HCT116 (cell line): ENCODE measurements at regions of chr15 and their contacts with region 1.

Region 1: GRCh38 chr15:52078876-52079700 is 33.5 kb downstream of the BCL2L10 start:
- DNase-seq: peak; percentile 54
- ATAC-seq: peak; percentile 92
- H3K4me3 ChIP-seq: no peak overlapping the region
- H3K27ac ChIP-seq: no peak overlapping the region
- H3K4me1 ChIP-seq: peaks cover 0 to 13% of the 10 kb centered on the region in 2 experiments; a peak in 3 of 4 replicates
- H3K27me3 ChIP-seq: no peaks in the 10 kb centered on the region
- CTCF ChIP-seq: peak; percentile 69 to 93 (median 92)
- POLR2A ChIP-seq: no peak
- RAD21 ChIP-seq: peak; percentile 85

Region 2: GRCh38 chr15:51649659-51650521 is 429.2 kb before region 1 on chr15:
- CTCF ChIA-PET with region 1: interaction called, 6 read pairs
- POLR2A ChIA-PET with region 1: no interaction called
- RAD21 ChIA-PET with region 1: no interaction called
- intact Hi-C with region 1: loop called (anchors 10 kb)
- DNase-seq: peak; percentile 71
- ATAC-seq: peak; percentile 98
- H3K4me3 ChIP-seq: no peak overlapping the region
- H3K27ac ChIP-seq: no peak overlapping the region
- H3K4me1 ChIP-seq: peaks cover 3 to 4% of the 10 kb centered on the region in 2 experiments; a peak in 2 of 4 replicates
- H3K27me3 ChIP-seq: no peaks in the 10 kb centered on the region
- CTCF ChIP-seq: peak; percentile 75 to 92 (median 82)
- POLR2A ChIP-seq: no peak
- RAD21 ChIP-seq: peak; percentile 94

Region 3: GRCh38 chr15:51667478-51667877 is 411.6 kb before region 1 on chr15:
- CTCF ChIA-PET with region 1: no interaction called
- POLR2A ChIA-PET with region 1: no interaction called
- RAD21 ChIA-PET with region 1: no interaction called
- intact Hi-C with region 1: no loop called
- DNase-seq: no peak
- ATAC-seq: no peak
- H3K4me3 ChIP-seq: no peak overlapping the region
- H3K27ac ChIP-seq: no peak overlapping the region
- H3K4me1 ChIP-seq: no peaks in the 10 kb centered on the region
- H3K27me3 ChIP-seq: no peaks in the 10 kb centered on the region
- CTCF ChIP-seq: no peak
- POLR2A ChIP-seq: no peak
- RAD21 ChIP-seq: no peak

Region 4: DNA sequence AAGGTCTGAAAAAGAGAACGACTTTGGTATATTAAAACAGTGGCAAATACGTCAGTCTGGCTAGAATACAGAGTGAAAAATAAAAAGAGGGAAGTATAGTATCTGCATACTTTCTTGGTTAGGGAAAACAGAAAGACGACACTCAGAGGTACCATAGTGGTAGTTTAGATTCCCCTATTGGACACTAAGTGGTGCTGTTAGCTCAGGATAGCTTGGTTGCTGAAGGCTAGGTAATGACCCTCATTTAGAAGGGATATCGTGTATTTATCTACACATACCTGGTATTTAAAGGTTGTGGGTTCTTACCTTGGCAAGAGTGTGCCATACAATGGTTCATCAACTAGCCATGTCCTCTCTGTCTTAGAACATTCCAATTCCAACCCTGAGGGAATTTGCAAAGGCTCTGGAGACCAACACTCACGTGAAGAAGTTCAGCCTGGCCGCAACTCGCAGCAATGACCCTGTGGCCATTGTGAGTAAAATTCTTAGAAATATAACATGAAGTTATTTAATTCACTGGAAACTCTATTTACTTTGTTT is 296.7 kb before region 1 on chr15:
- CTCF ChIA-PET with region 1: interaction called, 4 read pairs
- POLR2A ChIA-PET with region 1: no interaction called
- RAD21 ChIA-PET with region 1: no interaction called
- intact Hi-C with region 1: loop called (anchors 5 kb)
- DNase-seq: peak; percentile 38
- ATAC-seq: peak; percentile 75
- H3K4me3 ChIP-seq: no peak overlapping the region
- H3K27ac ChIP-seq: no peak overlapping the region
- H3K4me1 ChIP-seq: peaks cover 0 to 10% of the 10 kb centered on the region in 2 experiments; a peak in 3 of 4 replicates
- H3K27me3 ChIP-seq: no peaks in the 10 kb centered on the region
- CTCF ChIP-seq: peak; percentile 50 to 67 (median 59); a peak in 5 of 6 replicates
- POLR2A ChIP-seq: no peak
- RAD21 ChIP-seq: peak; percentile 77

Region 5: DNA sequence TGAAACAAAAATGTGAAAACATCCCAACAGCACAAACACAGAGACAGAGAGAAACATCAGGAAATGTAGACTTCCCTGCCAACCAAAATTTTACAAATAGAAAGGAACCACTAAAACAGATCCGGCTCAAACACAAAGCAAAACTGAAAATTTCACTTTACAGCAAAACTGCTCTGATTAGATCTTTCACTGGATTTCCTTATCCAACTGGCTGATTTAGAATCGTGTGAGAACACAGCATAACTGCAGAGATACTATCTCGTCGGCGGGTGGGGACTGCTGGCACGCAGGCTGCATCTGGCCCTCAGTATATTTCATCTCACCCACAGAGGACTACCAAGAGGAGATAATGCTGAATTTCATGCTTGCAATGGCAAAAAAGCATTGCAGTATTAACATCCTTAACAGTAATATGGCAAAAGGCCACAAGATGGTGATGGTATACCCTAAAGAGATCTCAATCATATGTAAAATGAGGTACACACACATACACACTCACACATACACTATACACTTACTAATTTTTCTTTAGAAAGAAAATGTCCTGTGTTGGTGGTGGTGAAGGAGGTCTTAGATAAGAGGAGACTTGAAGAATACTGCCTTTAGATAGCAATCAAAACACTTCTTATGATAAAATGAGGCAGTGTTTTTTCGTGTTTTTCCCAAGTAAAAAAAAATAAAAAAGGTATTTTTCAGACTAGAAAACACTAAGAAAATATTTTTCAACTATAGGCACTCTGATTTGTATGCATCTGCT is 96.9 kb before region 1 on chr15:
- CTCF ChIA-PET with region 1: interaction called, 7 read pairs
- POLR2A ChIA-PET with region 1: no interaction called
- RAD21 ChIA-PET with region 1: interaction called in 1 of 2 experiments, 3 read pairs
- intact Hi-C with region 1: loop called (anchors 1 kb)
- DNase-seq: peak; percentile 50
- ATAC-seq: peak; percentile 93
- H3K4me3 ChIP-seq: no peak overlapping the region
- H3K27ac ChIP-seq: no peak overlapping the region
- H3K4me1 ChIP-seq: peaks cover 0 to 11% of the 10 kb centered on the region in 2 experiments; a peak in 2 of 4 replicates
- H3K27me3 ChIP-seq: no peaks in the 10 kb centered on the region
- CTCF ChIP-seq: peak; percentile 44 to 82 (median 76); a peak in 5 of 6 replicates
- POLR2A ChIP-seq: no peak
- RAD21 ChIP-seq: peak; percentile 88

Region 6: DNA sequence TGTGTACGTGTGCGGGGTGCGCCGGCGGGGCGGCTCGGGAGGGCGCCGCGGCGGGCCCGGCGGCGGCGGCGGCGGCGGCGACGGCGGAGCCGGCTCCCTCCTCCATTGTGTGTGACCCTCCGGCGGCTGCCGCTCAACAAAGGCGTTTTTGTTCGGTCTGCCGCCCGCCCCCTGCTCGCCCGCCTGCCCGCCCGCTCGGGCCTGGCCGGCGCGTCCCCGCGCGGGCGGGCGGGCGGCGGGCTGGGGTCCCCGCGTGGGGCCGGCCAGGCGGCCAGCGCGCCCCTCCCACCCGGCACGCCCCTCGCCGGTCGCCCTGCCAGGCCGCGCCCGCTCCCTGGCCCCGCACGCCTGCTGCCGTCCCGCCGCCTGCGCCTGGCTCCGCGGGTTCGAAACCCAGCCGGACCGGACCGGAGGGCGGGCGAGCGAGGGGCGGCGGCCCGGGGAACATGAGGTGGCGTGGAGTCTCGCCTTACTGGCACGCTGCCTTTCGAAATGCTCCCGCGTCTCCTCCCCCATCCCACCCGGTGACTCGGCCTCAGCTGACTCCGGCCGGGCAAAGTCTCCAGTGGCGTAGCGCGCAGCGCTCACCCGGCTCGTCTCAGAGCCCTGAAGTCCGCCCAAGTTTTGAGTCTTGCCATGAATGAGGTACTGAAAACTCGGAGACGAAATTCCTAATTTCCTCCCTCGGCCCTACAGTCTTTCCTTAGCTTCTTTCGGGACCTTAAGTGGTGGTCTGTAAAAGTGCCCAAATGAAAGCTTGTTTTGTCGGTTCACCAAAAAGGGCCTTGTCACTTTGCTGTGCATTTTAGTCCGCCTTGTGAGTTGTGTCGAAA is 59.5 kb before region 1 on chr15:
- CTCF ChIA-PET with region 1: no interaction called
- POLR2A ChIA-PET with region 1: interaction called, 5 read pairs
- RAD21 ChIA-PET with region 1: interaction called in 1 of 2 experiments, 3 read pairs
- intact Hi-C with region 1: loop called (anchors 2 kb)
- DNase-seq: no peak
- ATAC-seq: peak; percentile 79
- H3K4me3 ChIP-seq: peak overlapping the region; percentile 76 to 78
- H3K27ac ChIP-seq: peak overlapping the region; percentile 90
- H3K4me1 ChIP-seq: peaks cover 34 to 45% of the 10 kb centered on the region in 2 experiments
- H3K27me3 ChIP-seq: no peaks in the 10 kb centered on the region
- CTCF ChIP-seq: no peak
- POLR2A ChIP-seq: no peak
- RAD21 ChIP-seq: no peak

Region 7: GRCh38 chr15:52068004-52068615 is 11.0 kb before region 1 on chr15:
- CTCF ChIA-PET with region 1: interaction called, 10 read pairs
- POLR2A ChIA-PET with region 1: interaction called, 3 read pairs
- RAD21 ChIA-PET with region 1: no interaction called
- intact Hi-C with region 1: no loop called
- DNase-seq: no peak
- ATAC-seq: no peak
- H3K4me3 ChIP-seq: no peak overlapping the region
- H3K27ac ChIP-seq: no peak overlapping the region
- H3K4me1 ChIP-seq: no peaks in the 10 kb centered on the region
- H3K27me3 ChIP-seq: no peaks in the 10 kb centered on the region
- CTCF ChIP-seq: no peak
- POLR2A ChIP-seq: no peak
- RAD21 ChIP-seq: no peak

Region 8: GRCh38 chr15:52124270-52124880 is 45.3 kb after region 1 on chr15:
- CTCF ChIA-PET with region 1: no interaction called
- POLR2A ChIA-PET with region 1: no interaction called
- RAD21 ChIA-PET with region 1: no interaction called
- intact Hi-C with region 1: no loop called
- DNase-seq: no peak
- ATAC-seq: no peak
- H3K4me3 ChIP-seq: no peak overlapping the region
- H3K27ac ChIP-seq: no peak overlapping the region
- H3K4me1 ChIP-seq: peaks cover 0 to 8% of the 10 kb centered on the region in 2 experiments; a peak in 1 of 4 replicates
- H3K27me3 ChIP-seq: no peaks in the 10 kb centered on the region
- CTCF ChIP-seq: no peak
- POLR2A ChIP-seq: no peak
- RAD21 ChIP-seq: no peak

Region 9: GRCh38 chr15:52154896-52155865 is 76.1 kb after region 1 on chr15:
- CTCF ChIA-PET with region 1: no interaction called
- POLR2A ChIA-PET with region 1: no interaction called
- RAD21 ChIA-PET with region 1: no interaction called
- intact Hi-C with region 1: no loop called
- DNase-seq: no peak
- ATAC-seq: no peak
- H3K4me3 ChIP-seq: no peak overlapping the region
- H3K27ac ChIP-seq: no peak overlapping the region
- H3K4me1 ChIP-seq: no peaks in the 10 kb centered on the region
- H3K27me3 ChIP-seq: no peaks in the 10 kb centered on the region
- CTCF ChIP-seq: 0 out of 6 replicates have a peak, but pooled peaks of 1 of the 3 experiments have one; percentile 1
- POLR2A ChIP-seq: no peak
- RAD21 ChIP-seq: no peak